ENCODE measurements at regions of chr10 and their contacts with region 1.

Region 1: GRCh38 chr10:31928549-31929260 is at the start of gene ARHGAP12:
- DNase-seq: peak; percentile 71 to 91 (median 80)
- H3K4me3 ChIP-seq: peak within 1 kb of the TSS; percentile 55 to 96 (median 86)
- H3K27ac ChIP-seq: peak within 1 kb of the TSS; percentile 66 to 98 (median 92)
- H3K27me3 ChIP-seq: no peaks in the 10 kb centered on the region
- CTCF ChIP-seq: peak in 10 of 56 donors; percentile 2 to 46 (median 11)
- total RNA-seq, gene ARHGAP12: 27.1 to 48.7 (median 38.6) TPM

Region 2: GRCh38 chr10:32055813-32056600 is 127.3 kb after region 1 on chr10 and contains the start of gene KIF5B:
- intact Hi-C with region 1: loop called (anchors 5 kb)
- DNase-seq: peak; percentile 66 to 94 (median 84)
- H3K4me3 ChIP-seq: peak within 1 kb of the TSS; percentile 54 to 98 (median 89)
- H3K27ac ChIP-seq: peak within 1 kb of the TSS; percentile 81 to 100 (median 99)
- H3K27me3 ChIP-seq: no peaks in the 10 kb centered on the region
- CTCF ChIP-seq: peak in 26 of 56 donors; percentile 2 to 48 (median 22)
- total RNA-seq, gene KIF5B: 73.4 to 239 (median 109) TPM